Activated CD4-positive, alpha-beta memory T cell treated with anti-CD3 and anti-CD28 coated beads for 36 hours (primary cell): ENCODE measurements at regions of chr6 and their contacts with region 1.

Region 1: DNA sequence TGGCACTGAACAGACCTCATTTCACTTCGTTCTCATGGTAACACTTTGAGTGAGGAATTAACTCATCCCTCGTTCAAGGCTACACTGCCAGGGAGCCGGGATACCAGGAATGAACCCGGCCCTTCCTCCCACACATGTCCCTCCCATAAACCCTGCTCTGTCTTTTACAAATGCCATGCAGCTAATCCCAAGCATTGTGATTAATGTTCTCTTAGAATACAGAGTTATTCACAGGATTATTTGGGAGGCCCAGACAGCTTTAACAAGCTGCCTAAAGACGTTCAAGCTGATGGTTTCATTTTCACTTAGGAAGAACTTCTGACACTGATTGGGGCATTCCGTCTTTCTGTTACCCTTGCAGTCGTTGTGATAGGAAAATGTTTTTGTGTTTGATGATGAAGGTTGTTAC is 42.5 kb upstream of the CD83 start:
- DNase-seq: no peak
- H3K4me3 Mint-ChIP-seq: peak overlapping the region; percentile 68
- H3K27ac Mint-ChIP-seq: peak overlapping the region; percentile 81
- H3K4me1 Mint-ChIP-seq: peaks cover 56% of the 10 kb centered on the region
- H3K27me3 Mint-ChIP-seq: no peaks in the 10 kb centered on the region

Region 2: GRCh38 chr6:13831615-13832014 is 243.5 kb before region 1 on chr6:
- CTCF ChIA-PET with region 1: no interaction called
- POLR2A ChIA-PET with region 1: no interaction called
- intact Hi-C with region 1: no loop called
- DNase-seq: no peak
- H3K4me3 Mint-ChIP-seq: no peak overlapping the region
- H3K27ac Mint-ChIP-seq: no peak overlapping the region
- H3K4me1 Mint-ChIP-seq: no peaks in the 10 kb centered on the region
- H3K27me3 Mint-ChIP-seq: peaks cover 2% of the 10 kb centered on the region

Region 3: DNA sequence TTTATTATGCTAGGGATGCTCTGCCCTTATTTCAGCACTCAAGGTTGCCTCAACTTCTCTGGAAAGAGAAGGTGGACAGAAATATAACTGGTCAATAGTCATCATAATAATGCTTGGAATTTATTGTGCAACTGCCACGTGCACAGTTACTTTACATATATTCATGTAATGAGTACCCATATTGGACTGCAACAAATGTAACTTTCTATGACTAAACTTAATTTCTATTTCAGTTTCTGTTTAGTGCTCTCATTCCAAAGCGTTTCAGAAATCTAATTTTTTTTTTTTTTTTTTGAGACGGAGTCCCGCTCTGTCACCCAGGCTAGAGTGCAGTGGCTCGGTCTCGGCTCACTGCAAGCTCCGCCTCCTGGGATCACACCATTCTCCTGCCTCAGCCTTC is 14.1 kb after region 1 on chr6:
- CTCF ChIA-PET with region 1: no interaction called
- POLR2A ChIA-PET with region 1: no interaction called
- intact Hi-C with region 1: loop called (anchors 2 kb)
- DNase-seq: no peak
- H3K4me3 Mint-ChIP-seq: no peak overlapping the region
- H3K27ac Mint-ChIP-seq: no peak overlapping the region
- H3K4me1 Mint-ChIP-seq: peaks cover 28% of the 10 kb centered on the region
- H3K27me3 Mint-ChIP-seq: peaks cover 12% of the 10 kb centered on the region

Region 4: DNA sequence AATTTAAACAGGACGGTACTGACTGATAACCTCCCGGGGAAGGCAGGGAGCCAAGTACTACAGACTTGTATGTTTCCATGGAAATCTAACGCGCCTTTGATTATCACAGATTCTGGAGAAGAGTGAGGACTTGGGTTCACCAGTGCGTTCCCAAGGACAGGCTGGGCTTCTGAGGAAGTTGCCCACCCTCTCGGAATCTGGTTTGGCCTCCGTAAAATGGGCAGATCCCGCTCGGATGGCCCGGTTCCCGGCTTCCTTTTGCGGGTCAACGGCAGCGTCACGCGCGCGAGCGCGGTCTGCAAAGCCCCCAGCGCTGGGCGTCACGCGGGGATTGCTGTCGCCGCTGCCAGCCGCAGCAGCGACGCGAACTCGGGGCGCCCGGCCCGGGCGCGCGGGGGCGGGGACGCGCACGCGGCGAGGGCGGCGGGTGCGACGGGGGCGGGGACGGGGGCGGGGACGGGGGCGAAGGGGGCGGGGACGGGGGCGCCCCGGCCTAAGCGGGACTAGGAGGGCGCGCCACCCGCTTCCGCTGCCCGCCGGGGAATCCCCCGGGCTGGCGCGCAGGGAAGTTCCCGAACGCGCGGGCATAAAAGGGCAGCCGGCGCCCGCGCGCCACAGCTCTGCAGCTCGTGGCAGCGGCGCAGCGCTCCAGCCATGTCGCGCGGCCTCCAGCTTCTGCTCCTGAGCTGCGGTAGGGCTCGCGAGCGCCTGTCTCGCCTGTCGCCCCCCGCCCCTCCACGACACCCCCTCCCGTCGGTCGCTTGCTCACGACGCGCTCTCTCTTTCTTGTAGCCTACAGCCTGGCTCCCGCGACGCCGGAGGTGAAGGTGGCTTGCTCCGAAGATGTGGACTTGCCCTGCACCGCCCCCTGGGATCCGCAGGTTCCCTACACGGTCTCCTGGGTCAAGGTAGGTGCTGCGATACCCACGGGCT is 42.3 kb after region 1 on chr6 and contains the start of gene CD83:
- CTCF ChIA-PET with region 1: no interaction called
- POLR2A ChIA-PET with region 1: interaction called, 3 read pairs
- intact Hi-C with region 1: loop called (anchors 1 kb)
- DNase-seq: peak; percentile 81
- H3K4me3 Mint-ChIP-seq: peak within 1 kb of the TSS; percentile 86
- H3K27ac Mint-ChIP-seq: peak within 1 kb of the TSS; percentile 76
- H3K4me1 Mint-ChIP-seq: peaks cover 37% of the 10 kb centered on the region
- H3K27me3 Mint-ChIP-seq: no peaks in the 10 kb centered on the region
- total RNA-seq, gene CD83: 21.8 to 23.0 TPM

Region 5: DNA sequence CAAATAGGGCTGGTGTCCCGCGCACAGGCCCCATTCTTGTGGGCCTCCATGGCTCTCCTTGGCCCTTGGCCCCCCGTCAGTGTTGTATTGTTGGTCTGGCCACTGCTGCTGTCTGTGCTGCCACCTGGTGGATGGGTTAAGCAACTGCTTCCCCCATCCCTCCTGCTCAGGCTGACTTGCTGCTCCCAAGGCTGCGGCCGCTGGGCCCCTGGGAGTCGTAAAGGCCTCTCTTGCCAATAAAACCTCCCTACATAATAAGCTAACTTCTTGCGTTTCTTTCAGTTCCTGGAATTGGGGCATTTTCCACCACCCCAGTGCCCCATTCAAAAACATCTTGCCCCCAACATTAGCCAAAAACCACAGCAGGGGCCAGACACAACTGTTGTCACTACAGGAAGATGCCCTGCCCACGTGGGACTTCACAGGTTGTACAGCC is 69.6 kb after region 1 on chr6:
- CTCF ChIA-PET with region 1: interaction called, 6 read pairs
- POLR2A ChIA-PET with region 1: no interaction called
- intact Hi-C with region 1: loop called (anchors 5 kb)
- DNase-seq: peak; percentile 81
- H3K4me3 Mint-ChIP-seq: no peak overlapping the region
- H3K27ac Mint-ChIP-seq: no peak overlapping the region
- H3K4me1 Mint-ChIP-seq: no peaks in the 10 kb centered on the region
- H3K27me3 Mint-ChIP-seq: no peaks in the 10 kb centered on the region